OCI-LY7 (cell line): ENCODE measurements at regions of chr5 and their contacts with region 1.

Region 1: DNA sequence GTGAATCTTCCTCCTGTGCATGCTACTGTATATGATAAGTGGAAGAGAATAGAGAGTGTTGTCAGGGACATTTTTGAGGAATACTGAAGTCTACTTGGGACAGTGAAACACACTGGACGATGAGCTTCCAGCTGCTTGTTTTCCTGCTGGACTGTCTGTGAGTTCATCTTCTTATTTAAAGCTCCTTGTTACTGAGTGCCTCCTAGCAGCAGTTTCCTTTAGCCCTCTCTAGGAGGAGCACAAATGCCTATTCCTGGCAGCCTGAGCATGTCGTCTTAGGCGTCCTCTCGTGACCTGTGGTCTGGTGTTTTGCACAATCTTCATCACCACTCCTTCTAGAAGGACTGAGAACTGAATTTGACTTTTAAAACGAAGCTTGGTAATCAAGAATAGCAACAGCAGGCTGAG is 43.8 kb downstream of the ANKRD33B start:
- DNase-seq: peak; percentile 77
- H3K4me3 ChIP-seq: peak overlapping the region; percentile 62
- H3K27ac ChIP-seq: peak overlapping the region; percentile 98
- H3K4me1 ChIP-seq: peaks cover 78% of the 10 kb centered on the region
- CTCF ChIP-seq: peak; percentile 59

Region 2: GRCh38 chr5:10353241-10354047 is 254.2 kb before region 1 on chr5 and contains the start of gene MARCHF6:
- CTCF ChIA-PET with region 1: no interaction called
- POLR2A ChIA-PET with region 1: interaction called, 3 read pairs
- intact Hi-C with region 1: loop called (anchors 5 kb)
- DNase-seq: peak; percentile 97
- H3K4me3 ChIP-seq: peak within 1 kb of the TSS; percentile 88
- H3K27ac ChIP-seq: peak within 1 kb of the TSS; percentile 88
- H3K4me1 ChIP-seq: peaks cover 40% of the 10 kb centered on the region
- CTCF ChIP-seq: no peak
- total RNA-seq, gene MARCHF6: 48.2 and 118 TPM in 2 replicates

Region 3: DNA sequence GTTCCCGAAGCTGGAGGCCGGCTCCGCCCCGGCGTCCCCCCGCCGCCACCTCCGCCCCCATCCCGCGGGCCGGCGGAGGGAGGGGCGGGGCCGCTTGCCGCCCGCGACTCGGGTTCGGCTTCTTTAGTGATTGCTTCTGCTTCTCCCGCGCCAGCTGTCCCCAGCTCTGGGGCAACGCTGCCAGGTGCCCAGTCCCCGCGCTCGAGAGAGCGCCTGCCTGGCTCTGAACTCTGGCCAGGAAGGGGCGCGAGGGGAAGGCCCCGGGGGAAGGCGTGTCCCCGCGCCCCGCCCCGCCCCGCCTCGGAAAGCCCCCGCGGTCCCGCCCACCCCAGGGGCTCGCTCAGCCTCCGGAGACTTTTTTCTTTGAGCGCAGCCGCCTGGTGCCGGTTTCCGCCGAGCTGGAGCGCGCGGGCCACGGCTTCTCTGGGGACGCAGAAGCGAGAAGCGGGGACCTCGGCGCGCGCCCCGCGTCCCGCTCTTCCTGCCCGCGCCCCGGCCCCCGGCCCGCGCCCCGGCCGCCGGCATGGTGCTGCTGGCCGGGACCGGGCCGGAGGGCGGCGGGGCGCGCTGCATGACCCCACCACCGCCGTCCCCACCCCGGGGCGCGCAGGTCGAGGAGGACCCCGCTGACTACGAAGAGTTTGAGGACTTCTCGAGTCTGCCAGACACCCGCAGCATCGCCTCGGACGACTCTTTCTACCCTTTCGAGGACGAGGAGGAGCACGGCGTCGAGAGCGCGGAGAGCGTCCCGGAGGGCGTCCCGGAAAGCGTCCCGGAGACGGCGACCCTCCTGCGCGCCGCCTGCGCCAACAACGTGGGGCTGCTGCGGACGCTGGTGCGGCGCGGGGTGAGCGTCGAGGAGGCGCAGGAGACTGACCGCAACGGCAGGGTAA is 43.5 kb before region 1 on chr5 and contains the start of gene ANKRD33B:
- CTCF ChIA-PET with region 1: interaction called, 7 read pairs
- POLR2A ChIA-PET with region 1: interaction called, 11 read pairs
- intact Hi-C with region 1: loop called (anchors 1 kb)
- DNase-seq: peak; percentile 91
- H3K4me3 ChIP-seq: peak within 1 kb of the TSS; percentile 78
- H3K27ac ChIP-seq: peak within 1 kb of the TSS; percentile 20
- H3K4me1 ChIP-seq: peaks cover 50% of the 10 kb centered on the region
- CTCF ChIP-seq: no peak
- total RNA-seq, gene ANKRD33B: 5.6 TPM in 2 replicates

Region 4: GRCh38 chr5:10592598-10592997 is 15.1 kb before region 1 on chr5:
- CTCF ChIA-PET with region 1: interaction called, 4 read pairs
- POLR2A ChIA-PET with region 1: interaction called, 11 read pairs
- intact Hi-C with region 1: no loop called
- DNase-seq: no peak
- H3K4me3 ChIP-seq: no peak overlapping the region
- H3K27ac ChIP-seq: no peak overlapping the region
- H3K4me1 ChIP-seq: peaks cover 29% of the 10 kb centered on the region
- CTCF ChIP-seq: no peak

Region 5: GRCh38 chr5:10627160-10627701 is 19.6 kb after region 1 on chr5:
- CTCF ChIA-PET with region 1: interaction called, 20 read pairs
- POLR2A ChIA-PET with region 1: interaction called, 35 read pairs
- intact Hi-C with region 1: loop called (anchors 1 kb)
- DNase-seq: no peak
- H3K4me3 ChIP-seq: peak overlapping the region; percentile 60
- H3K27ac ChIP-seq: peak overlapping the region; percentile 53
- H3K4me1 ChIP-seq: peaks cover 41% of the 10 kb centered on the region
- CTCF ChIP-seq: no peak

Region 6: GRCh38 chr5:10701567-10702039 is 93.9 kb after region 1 on chr5:
- CTCF ChIA-PET with region 1: no interaction called
- POLR2A ChIA-PET with region 1: interaction called, 6 read pairs
- intact Hi-C with region 1: loop called (anchors 1 kb)
- DNase-seq: peak; percentile 61
- H3K4me3 ChIP-seq: no peak overlapping the region
- H3K27ac ChIP-seq: peak overlapping the region; percentile 95
- H3K4me1 ChIP-seq: peaks cover 64% of the 10 kb centered on the region
- CTCF ChIP-seq: peak; percentile 76